ENCODE measurements at regions of chr2 and their contacts with region 1.

Region 1: DNA sequence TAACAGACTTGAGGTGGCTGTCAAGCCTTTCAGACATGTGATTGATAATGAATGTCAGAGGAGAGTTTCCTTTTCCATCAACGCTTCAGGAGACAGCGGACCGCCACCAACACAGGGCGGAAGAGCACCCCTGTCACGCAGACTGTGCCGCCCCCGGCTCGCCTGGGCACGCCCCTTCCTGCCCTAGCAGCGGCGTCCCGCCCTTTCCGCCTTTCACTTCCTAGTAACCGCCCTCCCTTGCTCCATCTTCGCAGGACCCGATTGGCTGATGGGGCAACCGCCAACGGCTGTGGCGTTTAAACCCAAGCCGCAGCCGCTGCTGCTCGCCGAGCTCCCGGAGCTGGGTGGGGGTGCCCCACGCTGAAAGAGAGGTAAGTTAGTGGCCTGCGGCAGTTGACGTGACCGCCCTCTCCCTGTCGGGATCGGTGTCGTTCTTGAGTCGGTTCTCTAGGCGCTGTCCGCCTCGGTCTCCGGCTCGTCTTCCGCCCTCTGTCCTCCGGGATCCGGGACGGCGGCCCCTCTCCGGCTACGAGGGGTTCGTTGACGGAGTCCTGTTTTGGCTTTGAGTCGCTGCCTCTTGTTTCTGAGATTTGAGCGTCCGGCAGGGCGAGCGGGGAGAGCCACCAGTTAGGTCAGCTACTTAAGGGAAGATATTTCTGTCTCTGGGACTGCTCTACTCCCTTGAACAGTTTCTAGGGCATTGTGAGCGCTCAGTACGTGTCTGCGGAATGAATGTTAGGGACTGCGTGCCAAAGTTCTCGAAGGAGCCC is at the start of gene SGO2:
- DNase-seq: peak; percentile 84 to 95 (median 94)
- ATAC-seq: peak; percentile 100
- H3K4me3 ChIP-seq: peak within 1 kb of the TSS; percentile 74
- H3K4me3 Mint-ChIP-seq: peak within 1 kb of the TSS; percentile 88 to 95 (median 92)
- H3K27ac ChIP-seq: peak within 1 kb of the TSS; percentile 64
- H3K27ac Mint-ChIP-seq: peak within 1 kb of the TSS; percentile 66 to 89 (median 85)
- H3K4me1 ChIP-seq: peaks cover 6 to 8% of the 10 kb centered on the region in 2 donors
- H3K4me1 Mint-ChIP-seq: peaks cover 7 to 34% (median 9%) of the 10 kb centered on the region in 7 donors
- H3K27me3 ChIP-seq: no peaks in the 10 kb centered on the region
- H3K27me3 Mint-ChIP-seq: peaks cover 0 to 1% (median 0%) of the 10 kb centered on the region in 5 donors
- total RNA-seq, gene SGO2: 1.4 to 32.3 (median 2.9) TPM

Region 2: GRCh38 chr2:199955339-199956261 is 570.5 kb before region 1 on chr2 and contains the starts of genes MAIP1 and TYW5:
- CTCF ChIA-PET with region 1: no interaction called
- POLR2A ChIA-PET with region 1: no interaction called
- intact Hi-C with region 1: loop called (anchors 1 kb)
- DNase-seq: peak; percentile 69 to 85 (median 79)
- ATAC-seq: peak; percentile 93
- H3K4me3 ChIP-seq: peak within 1 kb of the TSS; percentile 95
- H3K4me3 Mint-ChIP-seq: peak within 1 kb of the TSS; percentile 96 to 99 (median 98)
- H3K27ac ChIP-seq: peak within 1 kb of the TSS; percentile 84
- H3K27ac Mint-ChIP-seq: peak within 1 kb of the TSS; percentile 93 to 98 (median 95)
- H3K4me1 ChIP-seq: peaks cover 27 to 34% of the 10 kb centered on the region in 2 donors
- H3K4me1 Mint-ChIP-seq: peaks cover 31 to 72% (median 59%) of the 10 kb centered on the region in 7 donors
- H3K27me3 ChIP-seq: no peaks in the 10 kb centered on the region
- H3K27me3 Mint-ChIP-seq: no peaks in the 10 kb centered on the region
- total RNA-seq, gene MAIP1: 14.5 to 27.8 (median 19.8) TPM
- total RNA-seq, gene TYW5: 6.3 to 13.3 (median 11.2) TPM

Region 3: DNA sequence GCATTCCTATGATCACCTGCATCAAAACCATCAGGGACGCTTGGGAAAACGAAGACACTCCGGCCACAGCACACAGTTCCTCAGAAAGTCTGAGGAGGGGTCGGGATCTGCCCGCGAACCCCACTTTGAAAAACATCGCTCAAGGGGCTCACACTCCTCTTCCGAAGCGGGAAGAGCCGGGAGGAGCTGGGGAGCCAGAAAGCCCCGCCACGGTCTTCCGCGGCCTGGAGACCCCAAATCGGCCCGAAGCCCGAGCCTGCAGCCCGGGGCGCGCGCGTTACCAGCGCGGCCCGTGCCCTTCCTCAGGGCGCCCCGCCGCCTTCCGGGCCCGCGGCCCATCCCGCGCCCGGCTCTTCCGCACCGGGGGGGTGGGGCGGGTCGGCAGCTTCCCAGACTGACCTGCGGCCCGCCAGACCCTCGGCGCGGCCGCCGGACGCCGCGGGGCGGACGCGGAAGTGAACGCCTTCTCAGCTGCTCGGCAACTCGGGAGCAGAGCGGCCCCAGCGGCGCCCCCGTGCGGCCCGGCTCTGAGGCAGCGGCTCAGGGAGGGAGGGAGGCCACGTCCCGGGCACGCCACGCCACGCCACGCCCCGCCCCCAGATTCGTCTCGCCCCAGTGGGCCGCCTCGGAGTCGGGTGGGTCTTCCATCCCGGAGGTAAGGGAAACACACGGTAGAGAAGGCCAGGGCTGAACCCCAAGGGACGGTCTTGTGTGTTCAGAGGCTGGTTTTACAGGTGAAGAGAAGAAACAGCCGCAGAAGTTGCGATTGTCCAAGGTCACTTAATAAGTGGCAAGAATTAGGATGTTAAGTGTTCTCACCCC is 16.2 kb before region 1 on chr2 and contains the start of gene KCTD18:
- CTCF ChIA-PET with region 1: interaction called, 5 read pairs
- POLR2A ChIA-PET with region 1: interaction called, 25 read pairs
- intact Hi-C with region 1: loop called (anchors 1 kb)
- DNase-seq: peak; percentile 82 to 93 (median 87)
- ATAC-seq: peak; percentile 100
- H3K4me3 ChIP-seq: peak within 1 kb of the TSS; percentile 53
- H3K4me3 Mint-ChIP-seq: peak within 1 kb of the TSS; percentile 83 to 98 (median 94)
- H3K27ac ChIP-seq: peak within 1 kb of the TSS; percentile 74
- H3K27ac Mint-ChIP-seq: peak within 1 kb of the TSS; percentile 88 to 97 (median 95)
- H3K4me1 ChIP-seq: peaks cover 6 to 22% of the 10 kb centered on the region in 2 donors
- H3K4me1 Mint-ChIP-seq: peaks cover 10 to 51% (median 34%) of the 10 kb centered on the region in 7 donors
- H3K27me3 ChIP-seq: no peaks in the 10 kb centered on the region
- H3K27me3 Mint-ChIP-seq: no peaks in the 10 kb centered on the region
- total RNA-seq, gene KCTD18: 14.9 to 20.8 (median 18.6) TPM

Region 4: DNA sequence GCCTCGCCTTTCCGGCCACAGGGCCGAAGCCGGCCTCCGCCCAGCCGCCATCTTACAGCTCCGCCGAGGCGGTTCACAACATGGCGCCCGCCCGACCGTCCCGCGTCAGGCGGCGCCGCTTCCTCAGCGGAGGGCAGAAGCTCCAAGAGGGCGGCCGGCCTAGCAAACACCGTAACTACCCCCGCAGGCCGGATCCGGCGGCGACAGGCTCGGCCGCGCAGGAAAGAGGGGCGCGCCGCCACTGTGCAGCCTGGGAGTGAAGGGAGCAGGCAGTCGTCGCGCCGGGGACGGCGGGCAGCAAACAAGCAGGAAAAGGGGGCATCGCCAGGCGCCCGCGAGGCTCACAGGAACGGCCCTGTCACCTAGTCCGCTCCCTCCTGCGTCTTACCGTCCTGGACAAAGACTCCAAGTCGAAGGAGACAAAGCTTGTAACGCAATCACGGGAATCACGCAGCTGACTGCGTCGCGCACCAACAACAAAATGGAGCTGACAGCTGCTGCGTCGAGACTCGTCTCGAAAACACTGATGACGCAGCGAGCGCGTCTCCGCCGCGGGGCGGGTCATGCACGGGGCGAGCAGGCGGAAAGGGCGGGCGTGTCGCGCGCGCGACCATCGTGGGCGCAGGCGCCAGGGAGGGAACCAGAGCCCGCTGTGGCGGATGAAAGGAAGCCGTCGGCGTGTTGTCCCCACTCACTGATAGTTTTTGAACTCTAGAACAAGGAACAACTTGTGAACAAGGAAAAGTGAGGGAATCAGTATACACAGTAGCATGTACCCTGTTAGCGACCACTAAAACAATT is 338.3 kb after region 1 on chr2 and contains the start of gene CLK1:
- CTCF ChIA-PET with region 1: no interaction called
- POLR2A ChIA-PET with region 1: interaction called, 4 read pairs
- intact Hi-C with region 1: loop called in 1 of 2 experiments (anchors 1 kb)
- DNase-seq: peak; percentile 87 to 97 (median 94)
- ATAC-seq: peak; percentile 89
- H3K4me3 ChIP-seq: peak within 1 kb of the TSS; percentile 100
- H3K4me3 Mint-ChIP-seq: peak within 1 kb of the TSS; percentile 89 to 98 (median 94)
- H3K27ac ChIP-seq: peak within 1 kb of the TSS; percentile 98
- H3K27ac Mint-ChIP-seq: peak within 1 kb of the TSS; percentile 99 to 100 (median 100)
- H3K4me1 ChIP-seq: peaks cover 23 to 26% of the 10 kb centered on the region in 2 donors
- H3K4me1 Mint-ChIP-seq: peaks cover 28 to 58% (median 48%) of the 10 kb centered on the region in 7 donors
- H3K27me3 ChIP-seq: no peaks in the 10 kb centered on the region
- H3K27me3 Mint-ChIP-seq: peaks cover 0 to 2% (median 0%) of the 10 kb centered on the region in 5 donors
- total RNA-seq, gene CLK1: 134 to 974 (median 502) TPM

Region 5: DNA sequence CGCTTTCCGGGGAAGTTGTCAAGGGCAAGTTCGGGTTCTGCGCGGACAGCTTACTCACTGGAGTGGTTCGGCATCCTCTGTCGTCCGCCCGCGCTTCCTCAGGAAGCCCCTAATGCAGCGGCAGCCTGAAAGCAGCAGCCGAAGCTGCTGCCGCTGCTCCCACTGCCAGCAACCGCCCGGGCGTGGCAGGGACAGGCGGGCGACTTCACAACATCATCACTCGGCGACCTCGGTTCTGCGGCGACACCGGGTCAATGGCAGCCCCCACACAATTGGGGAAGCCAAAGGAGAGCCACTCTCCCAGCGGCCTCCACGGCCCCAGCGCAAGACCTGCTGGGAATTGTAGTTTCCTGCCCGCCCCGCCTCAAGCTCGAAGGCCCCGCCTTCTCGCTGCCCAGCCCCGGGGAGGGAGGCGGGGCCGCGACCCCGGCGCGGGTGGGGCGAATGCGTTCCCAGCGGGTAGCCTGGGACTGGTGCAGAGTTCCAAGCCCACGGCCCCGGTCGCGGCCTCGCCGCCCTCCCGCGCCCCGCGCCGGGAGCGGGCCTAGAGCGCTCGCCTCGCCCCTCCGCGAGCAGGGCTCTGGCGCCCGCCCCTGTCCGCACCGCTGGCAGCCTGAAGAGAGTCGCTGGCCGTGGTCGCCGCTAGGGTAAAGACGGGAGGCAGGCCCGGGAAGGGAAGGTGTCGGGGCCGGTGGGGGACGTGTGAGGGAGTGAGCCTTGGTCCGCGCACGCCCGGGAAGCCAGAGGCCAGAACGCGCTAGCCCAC is 925.4 kb after region 1 on chr2 and contains the starts of genes STRADB and TRAK2:
- CTCF ChIA-PET with region 1: no interaction called
- POLR2A ChIA-PET with region 1: no interaction called
- intact Hi-C with region 1: loop called in 1 of 2 experiments (anchors 10 kb)
- DNase-seq: peak; percentile 84 to 95 (median 92)
- ATAC-seq: peak; percentile 96
- H3K4me3 ChIP-seq: peak within 1 kb of the TSS; percentile 96
- H3K4me3 Mint-ChIP-seq: peak within 1 kb of the TSS; percentile 94 to 98 (median 97)
- H3K27ac ChIP-seq: peak within 1 kb of the TSS; percentile 83
- H3K27ac Mint-ChIP-seq: peak within 1 kb of the TSS; percentile 85 to 97 (median 95)
- H3K4me1 ChIP-seq: peaks cover 33 to 39% of the 10 kb centered on the region in 2 donors
- H3K4me1 Mint-ChIP-seq: peaks cover 27 to 69% (median 41%) of the 10 kb centered on the region in 7 donors
- H3K27me3 ChIP-seq: no peaks in the 10 kb centered on the region
- H3K27me3 Mint-ChIP-seq: peaks cover 0 to 8% (median 0%) of the 10 kb centered on the region in 5 donors
- total RNA-seq, gene STRADB: 11.9 to 18.4 (median 16.1) TPM
- total RNA-seq, gene TRAK2: 27.8 to 47.6 (median 35.2) TPM